ENCODE measurements at regions of chr5 and their contacts with region 1.

Region 1: GRCh38 chr5:127564002-127564769 is 46.7 kb downstream of the PRRC1 start:
- DNase-seq: peak; percentile 68
- H3K4me3 ChIP-seq: no peak overlapping the region
- H3K27ac ChIP-seq: no peak overlapping the region
- H3K4me1 ChIP-seq: no peaks in the 10 kb centered on the region
- H3K27me3 ChIP-seq: peaks cover 30% of the 10 kb centered on the region
- CTCF ChIP-seq: peak; percentile 76

Region 2: GRCh38 chr5:127335381-127335780 is 228.8 kb before region 1 on chr5:
- CTCF ChIA-PET with region 1: no interaction called
- POLR2A ChIA-PET with region 1: no interaction called
- intact Hi-C with region 1: no loop called
- DNase-seq: no peak
- H3K4me3 ChIP-seq: no peak overlapping the region
- H3K27ac ChIP-seq: no peak overlapping the region
- H3K4me1 ChIP-seq: no peaks in the 10 kb centered on the region
- H3K27me3 ChIP-seq: no peaks in the 10 kb centered on the region
- CTCF ChIP-seq: no peak

Region 3: GRCh38 chr5:127875235-127876021 is 311.2 kb after region 1 on chr5:
- CTCF ChIA-PET with region 1: no interaction called
- POLR2A ChIA-PET with region 1: no interaction called
- intact Hi-C with region 1: loop called (anchors 10 kb)
- DNase-seq: peak; percentile 62
- H3K4me3 ChIP-seq: no peak overlapping the region
- H3K27ac ChIP-seq: no peak overlapping the region
- H3K4me1 ChIP-seq: no peaks in the 10 kb centered on the region
- H3K27me3 ChIP-seq: peaks cover 14% of the 10 kb centered on the region
- CTCF ChIP-seq: peak; percentile 47

Region 4: GRCh38 chr5:128083033-128083810 is 519.0 kb after region 1 on chr5 and contains the start of gene SLC12A2:
- CTCF ChIA-PET with region 1: no interaction called
- POLR2A ChIA-PET with region 1: no interaction called
- intact Hi-C with region 1: loop called (anchors 1 kb)
- DNase-seq: peak; percentile 93
- H3K4me3 ChIP-seq: peak within 1 kb of the TSS; percentile 76
- H3K27ac ChIP-seq: peak within 1 kb of the TSS; percentile 75
- H3K4me1 ChIP-seq: no peaks in the 10 kb centered on the region
- H3K27me3 ChIP-seq: peaks cover 31% of the 10 kb centered on the region
- CTCF ChIP-seq: no peak
- total RNA-seq, gene SLC12A2: 10.4 and 10.7 TPM in 2 replicates

Region 5: DNA sequence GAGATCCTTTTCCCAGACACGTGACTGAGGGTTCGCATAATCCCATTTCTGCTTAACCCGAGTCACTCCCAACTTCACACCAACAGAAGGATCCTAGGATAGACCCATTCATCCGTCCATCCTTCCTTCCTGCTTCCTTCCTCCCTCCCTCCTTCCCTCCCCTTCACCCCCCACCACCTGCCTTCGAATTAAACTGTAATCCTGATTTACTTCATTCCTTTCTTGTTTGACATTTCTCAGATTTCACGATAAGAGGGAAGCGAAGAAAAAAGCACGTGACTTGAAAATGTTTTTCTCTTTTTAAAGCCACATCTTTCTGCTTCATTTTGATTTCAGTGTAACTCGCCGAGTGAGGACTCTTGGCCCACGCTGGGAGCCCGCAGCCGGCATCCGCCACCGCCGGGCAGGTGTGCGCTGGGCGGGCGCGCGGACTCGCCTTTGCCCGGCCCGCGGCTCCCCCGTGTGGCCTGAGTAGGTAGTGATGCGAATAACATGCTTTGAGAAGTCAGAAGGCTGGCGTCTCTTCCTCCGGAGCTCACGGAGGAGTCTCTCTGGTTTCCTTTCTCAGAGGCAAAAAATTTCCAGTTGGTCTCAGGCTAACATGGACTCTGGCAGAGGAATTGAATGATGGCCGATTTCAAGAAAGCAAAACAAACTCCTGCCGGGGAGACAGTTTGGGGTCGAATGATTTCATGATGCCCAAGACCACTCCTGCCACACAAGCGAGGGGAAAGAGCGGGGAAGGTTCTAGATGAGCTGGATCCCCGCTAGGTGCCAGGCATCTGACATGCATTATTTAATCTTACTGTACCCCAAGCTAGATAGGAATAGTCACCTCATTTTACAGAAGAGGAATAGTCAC is 637.1 kb after region 1 on chr5:
- CTCF ChIA-PET with region 1: no interaction called
- POLR2A ChIA-PET with region 1: no interaction called
- intact Hi-C with region 1: loop called (anchors 1 kb)
- DNase-seq: peak; percentile 69
- H3K4me3 ChIP-seq: peak overlapping the region; percentile 28
- H3K27ac ChIP-seq: no peak overlapping the region
- H3K4me1 ChIP-seq: peaks cover 4% of the 10 kb centered on the region
- H3K27me3 ChIP-seq: no peaks in the 10 kb centered on the region
- CTCF ChIP-seq: peak; percentile 75

Region 6: DNA sequence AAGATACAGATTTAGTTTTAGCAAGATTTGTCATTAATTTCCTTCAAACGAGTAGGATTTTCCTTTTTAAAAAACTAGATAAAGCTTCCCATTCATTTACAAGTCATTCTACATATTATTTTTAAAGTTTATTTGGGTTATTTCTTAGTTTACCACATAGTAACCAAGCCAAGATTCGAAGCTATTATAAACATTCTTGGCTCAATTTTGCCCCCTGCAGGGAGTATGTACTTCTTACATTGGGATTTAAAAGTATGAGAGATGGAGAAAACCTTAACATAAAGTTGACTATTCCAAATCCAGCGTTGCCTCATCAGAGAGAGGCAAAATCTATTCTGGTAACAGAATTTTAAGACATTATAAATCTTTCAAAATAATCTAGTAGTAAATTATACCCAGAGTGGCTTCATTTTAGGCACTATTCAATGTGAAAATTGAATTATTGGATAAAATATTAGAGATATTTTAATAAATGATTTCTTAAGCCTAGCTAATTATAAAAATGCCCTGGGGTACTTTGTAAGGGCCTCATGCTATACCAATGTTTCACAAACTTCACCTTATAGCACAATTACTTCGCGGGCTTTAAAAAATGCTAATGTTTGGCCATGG is 934.8 kb after region 1 on chr5:
- CTCF ChIA-PET with region 1: no interaction called
- POLR2A ChIA-PET with region 1: no interaction called
- intact Hi-C with region 1: loop called (anchors 10 kb)
- DNase-seq: peak; percentile 55
- H3K4me3 ChIP-seq: no peak overlapping the region
- H3K27ac ChIP-seq: no peak overlapping the region
- H3K4me1 ChIP-seq: no peaks in the 10 kb centered on the region
- H3K27me3 ChIP-seq: no peaks in the 10 kb centered on the region
- CTCF ChIP-seq: peak; percentile 47

Region 7: DNA sequence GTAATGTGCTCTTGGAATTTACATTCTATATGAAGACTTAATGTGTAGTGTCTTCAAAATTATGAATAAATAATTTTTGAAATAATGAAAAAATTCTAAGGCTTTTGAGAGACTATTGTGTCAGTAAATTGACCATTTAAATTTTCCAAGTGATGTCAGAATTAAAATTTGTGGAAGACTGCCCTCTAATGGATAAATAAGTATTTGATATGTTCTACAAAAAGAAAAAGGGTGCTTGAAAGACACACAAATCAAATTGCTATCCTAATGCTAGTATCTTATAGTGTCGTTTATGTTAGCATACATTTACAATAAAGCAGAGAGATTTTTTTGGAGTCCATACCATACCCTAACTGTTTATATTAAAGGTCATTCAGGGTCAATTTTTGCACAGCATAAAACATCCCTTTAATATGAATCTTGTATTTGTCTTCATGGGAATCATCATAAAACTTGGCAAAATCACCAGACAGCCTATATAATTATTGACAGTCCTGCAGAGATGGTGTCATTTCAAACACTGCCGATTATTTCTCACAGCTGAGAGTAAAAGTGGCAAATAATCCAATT is 1280.3 kb after region 1 on chr5:
- CTCF ChIA-PET with region 1: no interaction called
- POLR2A ChIA-PET with region 1: no interaction called
- intact Hi-C with region 1: loop called (anchors 10 kb)
- DNase-seq: peak; percentile 42
- H3K4me3 ChIP-seq: no peak overlapping the region
- H3K27ac ChIP-seq: no peak overlapping the region
- H3K4me1 ChIP-seq: no peaks in the 10 kb centered on the region
- H3K27me3 ChIP-seq: no peaks in the 10 kb centered on the region
- CTCF ChIP-seq: peak; percentile 45